GM13977 (cell line): ENCODE measurements at regions of chr9 and their contacts with region 1.

Region 1: GRCh38 chr9:99819856-99820684 is 1.6 kb upstream of the NR4A3 start:
- DNase-seq: peak; percentile 94
- CTCF ChIP-seq: peak; percentile 33

Region 2: DNA sequence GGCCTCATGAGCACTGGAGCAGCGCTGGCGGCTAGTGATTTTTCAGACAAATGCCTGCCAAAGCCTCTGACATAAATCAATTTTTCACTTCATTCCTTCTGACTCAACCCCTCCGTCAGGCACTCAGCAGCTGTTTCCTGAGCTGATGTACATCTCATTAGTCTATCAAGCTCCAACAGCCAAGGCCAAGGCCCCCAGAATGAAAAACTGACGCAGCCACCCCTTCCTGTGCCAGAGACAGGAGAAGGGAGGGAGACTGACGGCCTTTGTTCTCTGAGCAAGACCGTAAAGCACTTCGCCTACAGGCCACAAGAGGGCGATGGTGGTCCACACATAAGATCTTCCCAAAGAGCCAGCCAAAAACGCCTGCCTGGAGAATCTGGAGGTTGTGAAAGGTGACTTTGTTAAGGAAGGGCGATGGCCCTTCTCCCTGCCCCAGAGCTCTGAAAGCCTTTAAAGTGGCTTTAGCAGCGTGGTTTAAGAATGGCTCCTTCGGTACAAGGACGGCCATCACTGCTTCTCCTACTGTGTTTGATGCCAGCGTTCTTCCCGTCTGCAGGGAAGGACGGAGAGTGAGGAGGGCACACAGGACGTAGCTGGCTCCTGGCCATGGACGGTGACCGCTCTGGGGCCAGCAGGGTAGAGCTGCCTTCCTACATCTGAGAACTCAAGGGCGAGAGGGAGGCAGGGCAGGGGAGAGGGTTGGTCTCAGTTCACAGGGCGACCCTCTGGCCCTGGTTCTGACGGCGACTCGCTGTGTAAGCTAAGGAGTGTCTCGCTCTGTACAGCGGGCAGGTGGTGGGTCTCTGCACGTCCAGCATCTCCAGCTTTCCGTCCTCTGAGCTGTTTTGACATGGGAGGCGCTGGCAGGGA is 635.4 kb before region 1 on chr9:
- in situ Hi-C with region 1: loop called (anchors 25 kb)
- DNase-seq: peak; percentile 69
- CTCF ChIP-seq: peak; percentile 93

Region 3: GRCh38 chr9:99966720-99967119 is 146.7 kb after region 1 on chr9:
- in situ Hi-C with region 1: no loop called
- DNase-seq: no peak
- CTCF ChIP-seq: no peak

Region 4: GRCh38 chr9:100216178-100216787 is 396.2 kb after region 1 on chr9:
- in situ Hi-C with region 1: loop called (anchors 25 kb)
- DNase-seq: peak; percentile 27
- CTCF ChIP-seq: peak; percentile 76

Region 5: DNA sequence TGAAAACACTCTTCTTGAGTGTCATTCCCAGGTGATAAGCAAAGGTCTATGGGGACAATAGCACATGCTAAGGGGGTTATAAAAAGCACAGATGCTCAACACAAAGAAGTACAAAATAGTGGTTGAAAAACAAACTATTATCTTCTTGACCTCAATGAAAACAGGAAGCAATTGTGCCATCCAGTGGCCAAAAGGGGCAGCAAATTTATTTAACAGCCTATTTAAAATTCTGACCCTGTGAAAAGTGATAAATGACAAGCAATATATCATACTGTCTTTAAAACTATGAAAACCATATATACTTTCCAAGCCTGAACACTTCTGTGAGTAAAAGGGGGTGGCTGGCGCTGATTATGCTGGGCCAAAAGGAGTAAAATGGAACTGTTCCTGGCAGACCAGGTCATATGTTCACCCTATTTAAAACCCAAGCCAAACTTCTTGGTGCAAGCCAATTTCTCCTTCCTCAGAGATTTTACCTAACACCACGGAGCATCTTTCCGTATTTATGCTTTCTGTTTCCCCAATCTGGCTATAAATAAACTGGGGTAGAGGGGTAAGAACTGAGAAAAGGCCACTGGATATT is 503.0 kb after region 1 on chr9:
- in situ Hi-C with region 1: loop called (anchors 25 kb)
- DNase-seq: peak; percentile 9
- CTCF ChIP-seq: peak; percentile 62

Region 6: GRCh38 chr9:100455470-100455869 is 635.4 kb after region 1 on chr9:
- in situ Hi-C with region 1: no loop called
- DNase-seq: no peak
- CTCF ChIP-seq: no peak